OCI-LY7 (cell line): ENCODE measurements at regions of chr1 and their contacts with region 1.

Region 1: DNA sequence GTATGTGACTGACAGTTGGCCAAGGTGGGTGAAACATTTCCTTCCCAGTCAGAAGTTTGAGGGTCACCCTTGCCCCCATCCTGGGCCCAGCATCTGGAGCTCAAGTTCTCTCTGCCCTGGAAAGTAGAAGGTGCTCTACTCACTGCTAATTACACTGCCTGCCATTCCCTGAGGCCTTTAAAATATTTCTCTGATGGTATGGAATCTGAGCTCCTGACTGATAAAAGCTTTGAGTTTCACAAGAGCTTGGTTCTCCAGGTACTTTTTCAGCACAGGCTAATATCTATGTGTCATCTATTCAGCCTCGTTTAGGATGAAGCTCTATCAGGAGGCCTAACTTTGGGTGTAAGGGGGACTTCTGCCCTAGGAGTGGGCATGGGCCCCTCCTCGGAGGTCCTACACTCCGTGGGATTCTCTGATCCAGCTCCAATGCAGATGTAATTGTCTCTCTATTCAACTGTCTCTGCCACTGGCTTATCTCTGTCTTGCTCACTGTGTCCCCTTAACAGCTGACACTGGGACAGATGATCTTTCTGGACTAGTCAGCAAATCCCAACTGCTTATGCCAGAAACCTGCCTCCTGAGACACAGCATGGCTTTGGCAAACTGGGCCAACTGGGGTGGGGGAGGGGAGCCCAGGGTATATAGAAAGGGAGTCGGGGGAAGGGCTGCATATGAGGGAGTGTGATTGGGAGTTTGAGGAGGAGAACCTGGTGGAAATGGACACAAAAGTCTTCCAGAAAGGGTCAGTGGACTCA is 104.2 kb upstream of the GADD45A start:
- DNase-seq: no peak
- H3K4me3 ChIP-seq: no peak overlapping the region
- H3K27ac ChIP-seq: no peak overlapping the region
- H3K4me1 ChIP-seq: no peaks in the 10 kb centered on the region
- CTCF ChIP-seq: no peak

Region 2: DNA sequence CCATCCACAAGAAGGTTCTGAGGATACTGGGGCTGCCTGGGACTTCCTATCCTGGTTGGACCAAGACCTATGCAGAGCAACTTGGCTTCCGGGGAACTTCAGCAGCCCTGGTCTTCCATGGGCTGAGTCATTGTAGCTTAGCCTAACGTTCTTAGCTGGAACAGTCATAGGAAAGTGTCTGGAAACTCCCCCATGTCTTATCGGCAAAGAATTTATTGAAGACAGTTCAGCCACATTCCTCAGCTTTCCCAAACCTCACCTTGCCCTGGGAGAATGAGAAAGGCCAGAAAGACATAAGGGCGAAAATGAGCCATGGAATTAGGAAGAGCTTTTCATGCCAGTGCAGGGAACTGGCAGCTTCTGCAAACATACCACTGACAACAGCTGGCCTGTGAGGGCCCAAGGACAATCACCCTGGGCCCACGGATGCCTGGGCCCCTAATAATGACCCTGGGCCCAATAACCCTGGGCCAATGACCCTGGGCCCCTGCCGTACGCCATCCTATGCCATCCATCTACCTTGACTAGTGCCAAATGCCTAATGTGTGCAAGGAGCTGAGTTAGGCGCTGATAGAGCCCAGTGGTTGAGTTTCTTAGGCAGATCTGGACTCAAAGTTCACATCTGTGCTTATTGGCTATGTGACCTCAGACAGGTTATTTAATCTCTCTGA is 10.2 kb before region 1 on chr1:
- CTCF ChIA-PET with region 1: interaction called, 3 read pairs
- POLR2A ChIA-PET with region 1: interaction called, 17 read pairs
- intact Hi-C with region 1: no loop called
- DNase-seq: no peak
- H3K4me3 ChIP-seq: no peak overlapping the region
- H3K27ac ChIP-seq: no peak overlapping the region
- H3K4me1 ChIP-seq: no peaks in the 10 kb centered on the region
- CTCF ChIP-seq: no peak

Region 3: GRCh38 chr1:67618285-67619018 is 37.6 kb after region 1 on chr1:
- CTCF ChIA-PET with region 1: no interaction called
- POLR2A ChIA-PET with region 1: no interaction called
- intact Hi-C with region 1: no loop called
- DNase-seq: no peak
- H3K4me3 ChIP-seq: no peak overlapping the region
- H3K27ac ChIP-seq: no peak overlapping the region
- H3K4me1 ChIP-seq: no peaks in the 10 kb centered on the region
- CTCF ChIP-seq: no peak